Activated T-helper 2 cell treated with anti-CD3 and anti-CD28 coated beads, Interferon-gamma antibody, Interleukin-2, Interleukin-4, amounts not matched to agents 10 μg/mL and 5 μg/mL and 100 μg/mL, durations not matched to agents 14 hours and 24 hours and 36 hours (primary cell): ENCODE measurements at regions of chr16 and their contacts with region 1.

Region 1: GRCh38 chr16:89350701-89351380 is 133.3 kb downstream of the ZNF778 start:
- DNase-seq: no peak
- H3K4me3 Mint-ChIP-seq: peak overlapping the region; percentile 23
- H3K27ac Mint-ChIP-seq: peak overlapping the region; percentile 89
- H3K4me1 Mint-ChIP-seq: peaks cover 70% of the 10 kb centered on the region
- H3K27me3 Mint-ChIP-seq: no peaks in the 10 kb centered on the region

Region 2: DNA sequence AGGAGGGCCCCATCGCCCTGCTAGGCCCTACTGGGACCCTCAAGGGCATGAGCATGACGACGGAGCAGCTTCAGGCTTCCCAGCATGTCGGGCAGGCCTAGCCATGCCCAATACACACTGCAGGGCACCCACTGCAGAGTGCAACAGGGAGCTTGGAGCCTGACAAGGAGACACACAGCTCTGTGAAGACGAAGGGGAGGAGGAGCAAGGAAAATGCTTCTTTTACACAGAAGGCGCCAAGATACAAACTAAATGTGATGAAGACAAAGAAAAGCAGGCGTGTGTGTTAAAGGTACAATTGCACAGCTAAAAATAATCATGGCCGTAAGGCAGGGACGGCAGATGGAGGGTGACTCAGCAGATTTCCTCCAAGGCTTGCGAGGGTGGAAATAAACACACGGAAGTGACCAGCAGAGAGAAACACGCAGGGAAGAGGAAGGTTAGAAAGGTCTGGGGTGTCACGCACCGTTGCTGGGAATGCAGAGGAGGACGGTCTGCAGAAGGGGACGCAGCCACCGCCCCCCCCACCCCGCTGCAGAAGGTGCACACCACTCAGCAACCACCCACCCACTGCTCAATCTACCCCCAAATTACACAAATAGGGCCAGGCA is 24.9 kb before region 1 on chr16:
- intact Hi-C with region 1: loop called (anchors 2 kb)
- DNase-seq: no peak
- H3K4me3 Mint-ChIP-seq: peak overlapping the region; percentile 13
- H3K27ac Mint-ChIP-seq: peak overlapping the region; percentile 67
- H3K4me1 Mint-ChIP-seq: peaks cover 73% of the 10 kb centered on the region
- H3K27me3 Mint-ChIP-seq: no peaks in the 10 kb centered on the region

Region 3: GRCh38 chr16:89332902-89333245 is 18.0 kb before region 1 on chr16:
- intact Hi-C with region 1: loop called (anchors 1 kb)
- DNase-seq: no peak
- H3K4me3 Mint-ChIP-seq: no peak overlapping the region
- H3K27ac Mint-ChIP-seq: peak overlapping the region; percentile 19
- H3K4me1 Mint-ChIP-seq: peaks cover 53% of the 10 kb centered on the region
- H3K27me3 Mint-ChIP-seq: no peaks in the 10 kb centered on the region

Region 4: DNA sequence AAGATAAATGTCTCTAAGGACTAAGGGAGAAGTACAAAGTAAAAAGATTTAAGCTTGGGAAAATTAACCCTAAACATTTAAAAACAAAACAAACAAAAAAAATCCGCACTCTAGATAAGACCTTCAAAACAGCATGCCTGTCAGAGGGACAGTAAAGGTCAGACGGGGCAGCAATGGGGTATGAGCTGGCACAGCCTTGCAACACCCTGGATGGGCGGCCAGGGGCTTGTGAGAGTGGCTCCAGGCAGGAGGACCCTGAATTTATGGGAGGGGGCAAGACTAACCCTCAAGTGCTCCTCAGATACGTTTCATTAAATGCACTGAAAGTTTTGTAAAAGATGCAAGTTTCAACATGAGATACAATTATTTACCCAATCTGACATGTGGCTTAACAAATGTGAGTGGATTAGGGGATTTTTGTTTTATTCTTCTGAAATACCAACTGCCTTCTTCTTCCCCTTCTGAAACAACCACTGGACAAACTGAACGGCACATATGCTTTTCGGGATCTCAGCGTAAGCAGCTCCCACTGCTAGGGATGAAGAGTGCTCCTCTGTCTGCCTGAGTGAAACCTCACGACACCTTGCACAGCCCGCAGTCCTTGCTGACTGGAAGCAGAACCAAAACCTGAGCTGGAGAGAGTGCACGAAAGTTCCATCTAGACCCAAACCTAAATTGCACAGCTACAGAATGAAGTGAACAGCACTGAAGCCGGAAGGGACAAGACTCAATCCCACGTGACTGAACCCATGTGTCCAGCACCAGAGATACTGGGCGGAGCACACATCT is 11.1 kb after region 1 on chr16:
- intact Hi-C with region 1: loop called (anchors 1 kb)
- DNase-seq: no peak
- H3K4me3 Mint-ChIP-seq: peak overlapping the region; percentile 62
- H3K27ac Mint-ChIP-seq: peak overlapping the region; percentile 86
- H3K4me1 Mint-ChIP-seq: peaks cover 88% of the 10 kb centered on the region
- H3K27me3 Mint-ChIP-seq: no peaks in the 10 kb centered on the region

Region 5: GRCh38 chr16:89507834-89508590 is 157.2 kb after region 1 on chr16 and contains the start of gene SPG7:
- intact Hi-C with region 1: no loop called
- DNase-seq: peak; percentile 91
- H3K4me3 Mint-ChIP-seq: peak within 1 kb of the TSS; percentile 90
- H3K27ac Mint-ChIP-seq: peak within 1 kb of the TSS; percentile 90
- H3K4me1 Mint-ChIP-seq: peaks cover 24% of the 10 kb centered on the region
- H3K27me3 Mint-ChIP-seq: no peaks in the 10 kb centered on the region
- total RNA-seq, gene SPG7: 115 and 125 TPM in 2 replicates